ENCODE measurements at regions of chr1 and their contacts with region 1.

Region 1: DNA sequence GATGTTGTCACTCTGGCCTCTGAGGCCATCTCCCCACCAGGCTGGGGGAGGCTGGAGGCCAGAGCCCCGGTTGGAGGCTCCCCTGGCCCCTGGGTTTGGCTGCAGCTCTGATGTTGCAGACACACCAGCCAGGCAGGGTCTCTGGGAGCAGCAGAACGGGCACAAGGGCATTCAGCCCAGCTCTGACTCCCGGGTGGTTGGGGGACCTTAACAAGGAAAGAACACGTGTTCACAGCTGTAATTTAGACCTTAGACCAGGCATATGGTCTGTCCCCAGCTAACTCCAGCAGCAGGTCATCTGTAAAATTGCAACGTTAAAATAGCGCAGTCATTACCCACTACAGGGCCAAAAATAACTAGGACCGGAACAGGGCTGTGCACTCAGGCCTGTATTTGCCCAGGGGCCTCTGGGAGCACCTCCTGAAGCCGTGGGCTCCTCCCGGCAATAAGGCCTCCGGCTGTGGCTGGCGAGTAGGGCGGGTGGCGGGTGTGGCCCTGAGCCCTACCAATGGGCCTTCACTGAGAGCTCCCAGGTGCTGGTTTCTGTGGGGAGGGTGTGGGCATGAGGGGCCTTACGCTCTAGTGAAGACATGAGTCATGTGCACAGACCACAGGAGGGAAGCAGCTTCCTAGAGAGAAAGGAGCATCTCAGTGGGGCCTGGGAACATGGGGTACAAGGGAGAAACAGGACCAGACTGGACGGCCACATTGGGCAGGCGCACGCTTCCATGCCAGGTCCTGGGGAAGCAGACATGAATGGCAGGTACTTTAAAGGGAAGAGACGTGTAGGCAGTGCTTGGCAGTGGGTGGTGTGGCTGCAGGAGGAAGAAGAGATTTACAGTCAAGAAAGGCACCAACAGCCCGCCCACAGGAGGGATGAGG is 6.1 kb downstream of the LDLRAP1 start:
- DNase-seq: peak; percentile 78
- H3K4me3 Mint-ChIP-seq: no peak overlapping the region
- H3K27ac Mint-ChIP-seq: peak overlapping the region; percentile 65
- H3K4me1 Mint-ChIP-seq: peaks cover 31% of the 10 kb centered on the region
- H3K27me3 Mint-ChIP-seq: no peaks in the 10 kb centered on the region
- CTCF ChIP-seq: no peak

Region 2: GRCh38 chr1:25520446-25521061 is 29.0 kb before region 1 on chr1:
- CTCF ChIA-PET with region 1: interaction called, 11 read pairs
- POLR2A ChIA-PET with region 1: no interaction called
- intact Hi-C with region 1: no loop called
- DNase-seq: peak; percentile 69
- H3K4me3 Mint-ChIP-seq: no peak overlapping the region
- H3K27ac Mint-ChIP-seq: no peak overlapping the region
- H3K4me1 Mint-ChIP-seq: no peaks in the 10 kb centered on the region
- H3K27me3 Mint-ChIP-seq: peaks cover 9% of the 10 kb centered on the region
- CTCF ChIP-seq: peak; percentile 62

Region 3: DNA sequence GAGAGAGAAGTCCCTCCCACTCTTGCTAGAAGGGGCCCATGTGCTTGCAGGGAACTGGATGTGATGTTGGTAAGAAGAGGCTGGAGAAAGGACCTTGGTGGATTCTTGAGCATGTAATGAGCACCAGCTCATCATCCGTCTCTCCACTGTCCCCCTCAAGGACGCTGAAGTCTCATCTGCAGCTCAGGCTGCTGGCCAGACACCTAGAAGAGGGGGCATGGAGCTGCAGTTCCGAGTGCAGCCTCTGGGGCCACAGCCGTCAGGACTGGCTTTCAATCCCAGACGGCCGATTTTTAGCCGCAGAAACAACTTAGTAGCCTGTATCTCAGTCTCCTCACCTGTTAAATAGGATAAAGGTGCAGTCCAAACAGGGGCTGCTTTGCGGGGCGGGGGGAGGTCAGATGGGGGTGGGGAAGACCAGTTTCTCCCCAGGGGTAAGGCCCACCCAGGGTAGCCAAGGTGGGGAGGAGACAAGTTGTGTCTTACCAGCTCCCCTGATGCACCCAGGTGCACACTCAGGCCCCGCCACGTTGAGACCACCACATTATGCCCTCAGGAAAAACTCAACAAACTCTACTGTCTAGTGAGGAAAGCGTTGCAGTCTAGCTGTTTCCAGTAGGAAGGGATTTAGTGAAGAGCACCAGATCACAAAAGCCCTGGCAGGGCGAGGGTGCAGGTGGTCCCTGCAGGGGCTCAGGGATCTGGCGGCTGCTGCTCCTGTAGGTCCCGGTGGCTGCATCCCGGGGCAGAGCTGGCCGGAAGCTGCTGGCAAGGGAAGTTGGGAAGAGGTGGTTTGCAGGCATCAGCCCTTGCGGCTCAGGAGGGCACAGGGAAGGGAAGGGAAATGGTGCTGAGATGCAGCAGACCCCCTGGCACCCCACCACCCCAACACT is 23.4 kb after region 1 on chr1:
- CTCF ChIA-PET with region 1: interaction called, 14 read pairs
- POLR2A ChIA-PET with region 1: interaction called, 9 read pairs
- intact Hi-C with region 1: no loop called
- DNase-seq: peak; percentile 65
- H3K4me3 Mint-ChIP-seq: peak overlapping the region; percentile 63
- H3K27ac Mint-ChIP-seq: peak overlapping the region; percentile 74
- H3K4me1 Mint-ChIP-seq: peaks cover 39% of the 10 kb centered on the region
- H3K27me3 Mint-ChIP-seq: no peaks in the 10 kb centered on the region
- CTCF ChIP-seq: peak; percentile 70